ENCODE measurements at regions of chr2 and their contacts with region 1.

Region 1: DNA sequence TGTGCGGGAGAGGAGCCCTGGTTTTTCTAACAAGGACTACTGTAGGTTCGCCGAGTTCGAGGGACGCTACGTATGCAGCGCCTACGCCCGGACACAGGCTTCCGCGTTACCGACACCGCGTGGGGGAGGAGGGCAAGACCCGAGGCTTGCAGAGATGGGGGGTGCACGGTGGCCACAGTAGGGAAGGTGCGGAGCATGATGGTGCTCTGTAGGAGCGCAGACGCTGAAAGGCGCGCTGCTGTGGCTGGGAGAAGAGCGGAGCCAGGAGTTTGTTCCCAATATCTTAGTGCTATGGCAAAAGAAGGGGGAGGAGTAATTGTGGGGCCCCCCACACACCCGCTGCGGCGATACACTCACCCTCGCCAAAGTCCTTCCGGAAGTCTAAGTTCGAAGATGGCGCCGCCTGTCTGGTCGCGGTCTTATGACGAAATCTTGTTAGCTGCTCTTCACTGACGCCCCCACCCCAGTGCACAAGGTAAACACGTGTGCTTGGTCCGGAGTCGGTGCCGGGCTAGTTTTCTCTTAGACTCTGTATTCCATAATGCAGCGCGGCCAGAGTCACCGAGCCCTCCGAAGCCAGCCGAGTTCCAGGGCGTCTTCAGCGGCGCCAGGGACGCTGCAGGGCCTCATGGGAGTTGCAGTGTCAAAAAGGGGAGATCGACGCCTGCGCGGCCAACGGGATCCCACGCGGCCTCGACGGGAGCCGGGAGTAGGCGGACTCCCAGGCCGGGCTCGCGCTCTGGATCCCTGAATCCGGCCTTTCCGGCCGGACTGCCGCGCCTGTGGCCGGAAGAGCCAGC is at the start of gene GTF3C2:
- DNase-seq: peak; percentile 87
- ATAC-seq: peak; percentile 83
- H3K4me3 Mint-ChIP-seq: peak within 1 kb of the TSS; percentile 98
- H3K27ac Mint-ChIP-seq: peak within 1 kb of the TSS; percentile 100
- H3K4me1 Mint-ChIP-seq: peaks cover 53% of the 10 kb centered on the region
- H3K27me3 Mint-ChIP-seq: no peaks in the 10 kb centered on the region
- CTCF ChIP-seq: no peak
- total RNA-seq, gene GTF3C2: 91.7 and 119 TPM in 2 replicates

Region 2: GRCh38 chr2:27380626-27381545 is 24.3 kb after region 1 on chr2 and contains the start of gene ZNF513:
- CTCF ChIA-PET with region 1: no interaction called
- POLR2A ChIA-PET with region 1: interaction called, 19 read pairs
- intact Hi-C with region 1: loop called (anchors 1 kb)
- DNase-seq: peak; percentile 85
- ATAC-seq: peak; percentile 91
- H3K4me3 Mint-ChIP-seq: peak within 1 kb of the TSS; percentile 87
- H3K27ac Mint-ChIP-seq: peak within 1 kb of the TSS; percentile 89
- H3K4me1 Mint-ChIP-seq: peaks cover 29% of the 10 kb centered on the region
- H3K27me3 Mint-ChIP-seq: no peaks in the 10 kb centered on the region
- CTCF ChIP-seq: no peak
- total RNA-seq, gene ZNF513: 30.1 and 32.8 TPM in 2 replicates

Region 3: GRCh38 chr2:27582695-27583389 is 226.3 kb after region 1 on chr2 and contains the start of gene ZNF512:
- CTCF ChIA-PET with region 1: no interaction called
- POLR2A ChIA-PET with region 1: no interaction called
- intact Hi-C with region 1: loop called (anchors 1 kb)
- DNase-seq: peak; percentile 81
- ATAC-seq: peak; percentile 95
- H3K4me3 Mint-ChIP-seq: peak within 1 kb of the TSS; percentile 97
- H3K27ac Mint-ChIP-seq: peak within 1 kb of the TSS; percentile 90
- H3K4me1 Mint-ChIP-seq: peaks cover 48% of the 10 kb centered on the region
- H3K27me3 Mint-ChIP-seq: peaks cover 4% of the 10 kb centered on the region
- CTCF ChIP-seq: no peak
- total RNA-seq, gene ZNF512: 45.4 and 48.7 TPM in 2 replicates